Natural killer cell (primary cell): ENCODE measurements at regions of chr22 and their contacts with region 1.

Region 1: DNA sequence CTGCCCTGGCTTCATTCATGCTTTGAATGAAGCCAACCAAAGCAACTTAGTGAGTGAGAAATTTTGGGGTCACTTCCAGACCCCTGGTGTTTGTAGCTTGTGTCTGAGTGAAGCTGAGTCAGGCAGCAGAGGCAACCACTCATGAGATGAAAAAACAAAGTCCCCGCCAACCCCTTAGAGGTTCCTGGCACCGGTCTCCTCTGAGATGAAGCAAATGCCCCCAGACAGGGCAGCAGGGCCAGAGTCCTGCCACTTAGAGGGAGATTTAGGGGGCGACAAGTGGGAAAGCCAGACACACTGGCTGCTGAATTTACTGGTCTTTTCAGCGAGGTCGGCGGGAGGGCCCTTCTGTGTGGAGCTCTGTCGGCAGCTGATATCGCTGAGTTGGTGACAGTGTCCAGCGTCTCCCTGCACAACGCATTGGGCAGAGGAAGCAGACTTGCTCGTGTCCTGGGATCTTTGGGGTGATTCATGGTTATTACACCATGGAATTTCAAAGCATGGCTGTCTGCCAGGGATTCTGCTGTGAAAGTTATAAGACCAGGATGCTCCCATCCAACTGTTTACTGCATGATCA is 482.6 kb downstream of the MIAT start:
- DNase-seq: no peak
- ATAC-seq: no peak
- H3K4me3 ChIP-seq: no peak overlapping the region
- H3K4me3 Mint-ChIP-seq: no peak overlapping the region
- H3K27ac ChIP-seq: no peak overlapping the region
- H3K27ac Mint-ChIP-seq: no peak overlapping the region
- H3K4me1 ChIP-seq: no peaks in the 10 kb centered on the region
- H3K4me1 Mint-ChIP-seq: no peaks in the 10 kb centered on the region
- H3K27me3 ChIP-seq: no peaks in the 10 kb centered on the region
- H3K27me3 Mint-ChIP-seq: peaks cover 5 to 12% of the 10 kb centered on the region in 2 donors
- CTCF ChIP-seq: no peak

Region 2: DNA sequence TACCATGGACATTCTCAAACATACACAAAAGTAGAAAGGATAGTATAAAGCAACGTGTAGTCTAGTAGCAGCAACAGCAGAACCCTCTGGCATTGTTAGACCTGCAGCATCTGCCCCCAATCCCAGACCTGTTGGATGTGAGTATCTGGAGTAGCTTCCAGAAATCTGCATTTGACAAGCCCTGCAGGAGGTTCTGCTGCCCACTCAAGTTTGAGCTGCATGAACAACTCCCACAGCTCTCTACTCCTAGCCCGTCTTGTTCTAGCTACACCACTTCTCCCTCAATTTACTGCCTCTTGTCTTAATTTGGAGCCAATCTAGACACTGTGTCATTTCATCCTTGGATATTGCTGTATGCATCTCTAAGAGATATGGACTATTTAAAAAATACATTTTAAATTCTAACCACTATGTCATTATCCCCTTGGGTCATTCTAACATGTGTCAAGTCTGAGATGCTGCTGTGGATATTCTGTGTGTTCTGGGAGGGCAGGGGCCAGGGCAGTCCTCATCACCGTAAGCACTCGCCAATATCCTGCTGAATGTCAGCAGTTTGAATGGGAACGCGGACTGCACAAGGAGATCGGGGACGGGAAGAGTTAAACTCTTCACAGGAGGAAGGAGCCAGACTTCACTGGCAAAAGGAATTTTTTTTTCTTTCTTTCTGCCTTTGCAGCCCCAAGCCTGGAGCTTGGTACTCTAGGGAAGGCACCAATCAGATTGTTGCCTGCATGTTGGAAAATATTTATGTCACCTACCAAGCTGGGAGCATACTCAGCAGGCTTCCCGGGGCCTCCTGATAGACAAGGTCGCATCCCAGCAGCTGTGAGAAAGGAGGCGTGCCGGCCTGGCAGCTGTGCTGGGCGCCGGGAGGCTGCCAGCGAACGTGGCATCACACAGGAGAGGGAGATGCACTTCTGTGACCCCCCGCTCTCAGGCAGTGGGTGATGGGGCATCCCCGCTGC is 53.7 kb before region 1 on chr22:
- intact Hi-C with region 1: loop called (anchors 10 kb)
- DNase-seq: no peak
- ATAC-seq: no peak
- H3K4me3 ChIP-seq: no peak overlapping the region
- H3K4me3 Mint-ChIP-seq: no peak overlapping the region
- H3K27ac ChIP-seq: no peak overlapping the region
- H3K27ac Mint-ChIP-seq: no peak overlapping the region
- H3K4me1 ChIP-seq: no peaks in the 10 kb centered on the region
- H3K4me1 Mint-ChIP-seq: no peaks in the 10 kb centered on the region
- H3K27me3 ChIP-seq: no peaks in the 10 kb centered on the region
- H3K27me3 Mint-ChIP-seq: peaks cover 23 to 25% of the 10 kb centered on the region in 2 donors
- CTCF ChIP-seq: no peak